HEK293 (cell line): ENCODE measurements at regions of chr9 and their contacts with region 1.

Region 1: DNA sequence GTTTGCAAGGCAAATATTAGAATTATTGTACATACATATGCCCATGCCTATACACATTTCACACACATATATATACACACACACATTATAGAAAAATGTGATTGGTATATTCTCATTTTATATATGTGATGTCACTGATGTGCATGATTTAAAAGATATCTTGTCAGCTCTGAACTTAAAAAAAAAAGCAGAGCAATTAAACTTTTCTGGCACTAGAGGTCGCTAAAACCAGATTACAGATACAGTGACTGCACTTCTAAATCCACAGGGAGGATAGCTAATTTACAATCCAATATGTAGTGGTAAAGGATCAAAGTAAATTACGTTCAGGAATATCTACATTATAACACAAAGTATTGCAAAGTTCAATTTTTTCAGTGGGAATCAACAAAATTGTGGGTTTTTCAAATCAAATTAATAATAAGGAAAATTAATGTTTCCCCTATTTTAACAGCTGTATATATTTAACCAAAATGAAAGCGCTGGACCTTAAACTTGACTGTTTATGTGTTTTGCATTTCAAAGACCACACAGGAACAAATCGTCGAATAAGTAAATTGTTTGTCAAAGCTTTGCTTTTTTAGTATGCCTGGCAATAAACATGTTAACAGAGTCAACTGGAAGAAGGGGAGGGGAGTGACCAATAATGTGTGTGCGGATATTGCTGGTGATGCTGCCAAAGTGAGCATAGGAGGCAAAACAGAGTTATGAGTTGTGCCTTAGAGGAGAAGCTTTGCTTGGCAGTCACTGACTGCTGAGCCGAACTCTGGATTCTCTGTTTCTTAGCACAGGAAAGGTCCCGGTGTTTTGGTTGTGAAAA is 1201.3 kb upstream of the C9orf72 start:
- H3K4me3 ChIP-seq: no peak overlapping the region
- H3K27ac ChIP-seq: no peak overlapping the region
- H3K4me1 ChIP-seq: no peaks in the 10 kb centered on the region
- CTCF ChIP-seq: no peak

Region 2: GRCh38 chr9:28598408-28598807 is 176.2 kb before region 1 on chr9:
- CTCF ChIA-PET with region 1: no interaction called
- POLR2A ChIA-PET with region 1: no interaction called
- H3K4me3 ChIP-seq: no peak overlapping the region
- H3K27ac ChIP-seq: no peak overlapping the region
- H3K4me1 ChIP-seq: no peaks in the 10 kb centered on the region
- CTCF ChIP-seq: no peak

Region 3: GRCh38 chr9:28747351-28747985 is 27.2 kb before region 1 on chr9:
- CTCF ChIA-PET with region 1: interaction called, 11 read pairs
- POLR2A ChIA-PET with region 1: no interaction called
- H3K4me3 ChIP-seq: no peak overlapping the region
- H3K27ac ChIP-seq: no peak overlapping the region
- H3K4me1 ChIP-seq: no peaks in the 10 kb centered on the region
- CTCF ChIP-seq: no peak

Region 4: GRCh38 chr9:28764532-28764931 is 10.1 kb before region 1 on chr9:
- CTCF ChIA-PET with region 1: interaction called, 12 read pairs
- POLR2A ChIA-PET with region 1: no interaction called
- H3K4me3 ChIP-seq: no peak overlapping the region
- H3K27ac ChIP-seq: no peak overlapping the region
- H3K4me1 ChIP-seq: no peaks in the 10 kb centered on the region
- CTCF ChIP-seq: no peak

Region 5: DNA sequence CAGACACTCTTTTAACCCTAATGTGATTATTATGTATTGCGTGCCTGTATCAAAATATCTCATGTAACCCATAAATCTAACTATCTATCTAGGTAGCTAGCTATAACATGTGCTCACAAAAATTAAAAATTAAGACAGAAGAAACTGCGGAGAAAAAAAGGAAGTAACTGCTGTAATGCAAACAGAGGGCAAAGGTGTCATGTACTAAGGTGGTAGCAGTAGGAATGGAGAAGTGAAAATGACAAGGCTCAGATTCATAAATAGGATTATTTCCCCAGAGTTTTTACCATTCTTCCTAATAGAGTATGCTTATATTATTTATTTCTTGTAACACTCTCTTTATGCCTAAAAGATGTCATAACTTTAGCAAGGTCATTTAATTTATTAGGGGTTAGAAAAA is 326.1 kb after region 1 on chr9:
- CTCF ChIA-PET with region 1: no interaction called
- POLR2A ChIA-PET with region 1: no interaction called
- H3K4me3 ChIP-seq: no peak overlapping the region
- H3K27ac ChIP-seq: no peak overlapping the region
- H3K4me1 ChIP-seq: no peaks in the 10 kb centered on the region
- CTCF ChIP-seq: no peak